K562 (cell line): ENCODE measurements at regions of chrX and their contacts with region 1.

Region 1: GRCh38 chrX:47217642-47218279 is 720 bp upstream of the CDK16 start:
- DNase-seq: peak; percentile 94 to 96 (median 96)
- ATAC-seq: peak; percentile 92
- H3K4me3 ChIP-seq: peak overlapping the region; percentile 87
- H3K27ac ChIP-seq: peak overlapping the region; percentile 96
- H3K4me1 ChIP-seq: peaks cover 16 to 30% of the 10 kb centered on the region in 2 experiments; a peak in 4 of 5 replicates
- H3K27me3 ChIP-seq: no peaks in the 10 kb centered on the region
- CTCF ChIP-seq: no peak
- EP300 ChIP-seq: no peak
- POLR2A ChIP-seq: no peak
- RAD21 ChIP-seq: no peak

Region 2: DNA sequence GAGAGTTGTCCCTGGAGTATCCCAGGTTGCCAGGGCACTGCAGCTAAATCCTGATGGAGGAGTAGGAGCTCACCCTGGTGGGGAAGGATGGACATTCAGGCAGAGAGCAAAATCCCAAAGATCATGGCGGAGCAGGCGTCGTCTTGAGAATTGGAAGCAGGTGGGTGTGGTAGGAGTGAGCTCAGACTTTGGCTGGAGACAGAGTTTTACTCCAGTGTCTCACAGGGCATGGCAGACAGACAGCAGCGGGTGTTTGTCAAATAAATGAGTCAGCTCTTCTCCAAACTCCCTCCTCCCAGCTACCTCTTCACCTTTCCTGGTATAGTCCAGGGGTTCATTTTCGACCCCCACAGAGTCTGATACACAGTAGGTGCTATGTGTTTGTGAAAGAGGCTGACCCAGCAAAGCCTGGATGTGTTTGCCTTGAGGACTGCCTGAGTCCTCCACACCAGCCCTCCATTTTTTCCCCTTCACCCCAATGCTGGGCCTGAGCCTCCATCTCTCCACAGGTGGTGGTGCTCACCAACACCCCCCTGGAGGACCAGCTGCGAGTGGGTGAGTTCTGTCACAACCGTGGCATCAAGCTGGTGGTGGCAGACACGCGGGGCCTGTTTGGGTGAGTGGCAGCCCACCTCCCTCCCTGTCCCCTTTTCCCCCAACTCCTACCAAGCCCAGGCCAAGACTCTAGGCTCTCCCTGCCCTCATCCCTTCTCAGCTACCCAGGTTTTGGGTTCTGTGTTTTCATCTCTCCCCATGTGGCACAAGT is 17.2 kb before region 1 on chrX:
- CTCF ChIA-PET with region 1: no interaction called
- POLR2A ChIA-PET with region 1: interaction called, 20 read pairs
- in situ Hi-C with region 1: no loop called
- intact Hi-C with region 1: no loop called
- DNase-seq: peak in 2 of 4 experiments; percentile 21 to 25
- ATAC-seq: no peak
- H3K4me3 ChIP-seq: no peak overlapping the region
- H3K27ac ChIP-seq: no peak overlapping the region
- H3K4me1 ChIP-seq: peaks cover 3% of the 10 kb centered on the region in 2 experiments; a peak in 3 of 5 replicates
- H3K27me3 ChIP-seq: no peaks in the 10 kb centered on the region
- CTCF ChIP-seq: no peak
- EP300 ChIP-seq: no peak
- POLR2A ChIP-seq: no peak
- RAD21 ChIP-seq: no peak

Region 3: DNA sequence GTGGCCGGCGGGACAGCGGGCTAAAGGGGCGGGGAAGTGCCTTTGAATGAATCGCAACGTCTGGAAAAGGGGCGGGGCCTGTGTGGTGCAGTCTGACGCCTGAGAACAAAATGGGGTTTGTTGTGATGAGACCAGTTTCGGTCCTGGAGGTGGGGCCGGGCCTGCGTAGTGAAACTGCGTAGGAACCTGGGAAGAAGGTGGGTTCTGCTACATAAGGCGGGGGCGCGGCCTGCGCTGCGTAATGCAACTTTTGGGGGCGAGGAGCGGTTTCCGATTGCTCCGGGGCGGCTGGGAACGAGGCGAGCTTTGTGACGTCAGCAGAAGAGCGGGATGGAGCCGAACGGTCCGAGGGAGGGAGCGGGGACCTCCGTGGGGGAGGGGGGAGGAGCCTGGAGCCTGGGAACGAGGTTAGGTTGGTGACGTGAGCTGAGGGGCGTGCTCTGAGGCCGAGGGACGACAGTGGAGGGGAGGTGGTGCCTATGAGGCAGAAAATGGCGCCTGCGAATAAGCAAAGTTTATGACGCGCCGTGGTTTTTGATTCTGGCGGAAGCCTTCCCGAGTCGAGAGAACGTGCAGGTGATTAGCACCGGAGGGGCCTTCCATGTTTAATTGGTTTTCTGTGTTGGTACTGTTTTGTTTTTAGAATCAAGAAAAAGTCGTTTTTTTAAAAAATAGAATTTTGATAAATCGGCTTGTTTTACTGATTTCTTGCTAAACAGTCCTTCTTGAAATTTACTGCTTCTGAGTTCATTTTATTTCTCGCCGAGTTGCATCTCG is 15.8 kb after region 1 on chrX:
- CTCF ChIA-PET with region 1: no interaction called
- POLR2A ChIA-PET with region 1: interaction called, 21 read pairs
- in situ Hi-C with region 1: no loop called
- intact Hi-C with region 1: loop called (anchors 1 kb)
- DNase-seq: peak; percentile 85 to 95 (median 88)
- ATAC-seq: peak; percentile 90
- H3K4me3 ChIP-seq: peak overlapping the region; percentile 65
- H3K27ac ChIP-seq: peak overlapping the region; percentile 93
- H3K4me1 ChIP-seq: peaks cover 6 to 12% of the 10 kb centered on the region in 2 experiments; a peak in 4 of 5 replicates
- H3K27me3 ChIP-seq: no peaks in the 10 kb centered on the region; a peak in 1 of 5 replicates
- CTCF ChIP-seq: no peak
- EP300 ChIP-seq: no peak
- POLR2A ChIP-seq: peak; percentile 10
- RAD21 ChIP-seq: no peak

Region 4: GRCh38 chrX:47581731-47582647 is 364.2 kb after region 1 on chrX and contains the start of gene TIMP1:
- CTCF ChIA-PET with region 1: no interaction called
- POLR2A ChIA-PET with region 1: no interaction called
- in situ Hi-C with region 1: no loop called
- intact Hi-C with region 1: no loop called
- DNase-seq: peak; percentile 92 to 95 (median 92)
- ATAC-seq: peak; percentile 98
- H3K4me3 ChIP-seq: peak within 1 kb of the TSS; percentile 75
- H3K27ac ChIP-seq: peak within 1 kb of the TSS; percentile 91
- H3K4me1 ChIP-seq: peaks cover 23 to 32% of the 10 kb centered on the region in 2 experiments; a peak in 4 of 5 replicates
- H3K27me3 ChIP-seq: no peaks in the 10 kb centered on the region
- CTCF ChIP-seq: no peak
- EP300 ChIP-seq: no peak; the same call in 1 of the 2 replicates
- POLR2A ChIP-seq: peak; percentile 86
- RAD21 ChIP-seq: no peak
- polyA plus RNA-seq, gene TIMP1: 530 to 699 TPM